ENCODE measurements at regions of chr16 and their contacts with region 1.

Region 1: DNA sequence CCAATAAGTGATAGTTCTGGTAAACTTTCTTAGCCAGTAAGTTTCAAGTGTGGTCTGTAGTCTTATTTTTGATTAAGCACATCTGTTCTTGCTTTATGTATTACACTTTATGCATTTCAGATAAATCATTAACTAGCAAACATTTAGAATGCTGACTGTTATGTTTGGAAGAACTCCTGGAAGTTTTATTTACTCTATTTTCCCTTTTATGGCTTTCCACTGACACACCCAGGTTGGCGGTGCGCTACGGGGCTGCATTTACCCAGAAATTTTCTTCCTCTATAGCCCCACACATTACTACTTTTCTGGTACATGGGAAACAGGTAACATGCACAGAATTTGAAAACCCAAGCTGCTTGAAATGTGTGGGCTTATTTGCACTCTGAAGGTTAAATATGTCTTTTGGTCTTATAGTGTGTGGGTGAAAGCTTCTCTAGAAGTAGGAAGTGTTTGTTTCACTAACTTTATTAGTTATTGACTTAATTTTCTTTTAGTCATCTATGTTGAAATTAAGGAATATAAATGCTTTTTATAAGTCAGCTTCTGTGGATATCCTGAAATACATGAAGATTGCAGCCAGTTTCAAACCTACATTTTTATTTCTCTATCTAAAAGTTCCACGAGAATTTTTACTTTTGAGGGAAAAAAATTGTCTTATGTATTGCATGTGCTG is 203.7 kb downstream of the PHKB start:
- DNase-seq: no peak
- H3K4me3 ChIP-seq: no peak overlapping the region
- H3K27ac ChIP-seq: no peak overlapping the region
- H3K4me1 ChIP-seq: no peaks in the 10 kb centered on the region
- H3K27me3 ChIP-seq: no peaks in the 10 kb centered on the region
- CTCF ChIP-seq: no peak

Region 2: GRCh38 chr16:47604306-47604705 is 60.5 kb before region 1 on chr16:
- CTCF ChIA-PET with region 1: no interaction called
- POLR2A ChIA-PET with region 1: no interaction called
- intact Hi-C with region 1: loop called (anchors 10 kb)
- DNase-seq: no peak
- H3K4me3 ChIP-seq: no peak overlapping the region
- H3K27ac ChIP-seq: no peak overlapping the region
- H3K4me1 ChIP-seq: peaks cover 8% of the 10 kb centered on the region
- H3K27me3 ChIP-seq: no peaks in the 10 kb centered on the region
- CTCF ChIP-seq: no peak